GM12878 (cell line): ENCODE measurements at regions of chr11 and their contacts with region 1.

Region 1: DNA sequence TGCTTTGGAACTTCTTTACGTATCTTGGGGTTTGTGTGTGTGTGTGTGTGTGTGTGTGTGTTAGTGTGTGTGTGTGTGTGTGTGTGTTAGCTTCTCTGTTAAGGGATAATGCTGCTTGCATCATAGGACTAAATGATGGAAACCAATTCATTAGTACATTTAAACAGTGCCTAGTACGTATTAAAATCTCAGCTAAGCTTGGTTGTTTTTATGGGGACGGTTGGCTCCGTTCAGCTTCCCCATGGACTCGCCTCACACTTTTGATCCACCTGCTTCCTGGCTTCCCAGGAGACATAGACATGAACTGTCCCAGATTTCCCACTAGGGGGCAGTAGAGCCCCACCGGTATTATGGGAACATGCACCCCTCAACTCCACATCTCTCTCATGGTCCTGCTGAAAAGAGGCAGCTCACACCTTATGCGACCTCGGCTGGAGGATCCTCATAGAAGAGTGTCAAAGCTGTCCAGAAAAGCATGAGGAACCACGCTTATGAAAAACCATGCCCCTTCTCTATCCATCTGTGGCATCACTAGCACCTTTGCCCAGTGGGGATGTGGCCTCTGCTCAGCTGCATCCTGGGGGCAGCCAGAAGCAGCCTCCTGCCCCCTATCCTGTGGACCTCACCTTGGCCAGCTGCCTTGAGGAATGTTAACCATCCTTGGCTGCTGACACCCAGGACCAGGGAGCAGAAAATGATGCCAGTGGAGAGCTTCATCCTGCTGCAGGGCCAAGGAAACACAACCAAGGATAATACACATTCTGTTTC is 9.7 kb upstream of the SAAL1 start:
- DNase-seq: peak; percentile 19
- ATAC-seq: peak; percentile 97
- H3K4me3 ChIP-seq: no peak overlapping the region
- H3K27ac ChIP-seq: no peak overlapping the region
- H3K4me1 ChIP-seq: no peaks in the 10 kb centered on the region
- H3K27me3 ChIP-seq: peaks cover 0 to 1% of the 10 kb centered on the region in 2 experiments; a peak in 2 of 4 replicates
- CTCF ChIP-seq: peak; percentile 85 to 91 (median 87); a peak in 5 of 6 replicates
- EP300 ChIP-seq: no peak
- POLR2A ChIP-seq: no peak
- RAD21 ChIP-seq: peak; percentile 92

Region 2: GRCh38 chr11:17887779-17888178 is 227.8 kb before region 1 on chr11:
- CTCF ChIA-PET with region 1: no interaction called
- POLR2A ChIA-PET with region 1: no interaction called
- RAD21 ChIA-PET with region 1: no interaction called
- SMC1A ChIA-PET with region 1: no interaction called
- in situ Hi-C with region 1: no loop called
- intact Hi-C with region 1: no loop called
- DNase-seq: no peak
- ATAC-seq: no peak
- H3K4me3 ChIP-seq: no peak overlapping the region
- H3K27ac ChIP-seq: no peak overlapping the region
- H3K4me1 ChIP-seq: no peaks in the 10 kb centered on the region
- H3K27me3 ChIP-seq: no peaks in the 10 kb centered on the region
- CTCF ChIP-seq: no peak
- EP300 ChIP-seq: no peak
- POLR2A ChIP-seq: no peak
- RAD21 ChIP-seq: no peak

Region 3: GRCh38 chr11:17991783-17992433 is 123.6 kb before region 1 on chr11:
- CTCF ChIA-PET with region 1: interaction called, 38 read pairs
- POLR2A ChIA-PET with region 1: no interaction called
- RAD21 ChIA-PET with region 1: interaction called, 10 read pairs
- SMC1A ChIA-PET with region 1: interaction called, 3 read pairs
- in situ Hi-C with region 1: no loop called
- intact Hi-C with region 1: no loop called
- DNase-seq: no peak
- ATAC-seq: peak; percentile 95
- H3K4me3 ChIP-seq: no peak overlapping the region
- H3K27ac ChIP-seq: no peak overlapping the region
- H3K4me1 ChIP-seq: no peaks in the 10 kb centered on the region
- H3K27me3 ChIP-seq: no peaks in the 10 kb centered on the region
- CTCF ChIP-seq: peak; percentile 76 to 83 (median 80)
- EP300 ChIP-seq: no peak
- POLR2A ChIP-seq: no peak
- RAD21 ChIP-seq: peak; percentile 83

Region 4: DNA sequence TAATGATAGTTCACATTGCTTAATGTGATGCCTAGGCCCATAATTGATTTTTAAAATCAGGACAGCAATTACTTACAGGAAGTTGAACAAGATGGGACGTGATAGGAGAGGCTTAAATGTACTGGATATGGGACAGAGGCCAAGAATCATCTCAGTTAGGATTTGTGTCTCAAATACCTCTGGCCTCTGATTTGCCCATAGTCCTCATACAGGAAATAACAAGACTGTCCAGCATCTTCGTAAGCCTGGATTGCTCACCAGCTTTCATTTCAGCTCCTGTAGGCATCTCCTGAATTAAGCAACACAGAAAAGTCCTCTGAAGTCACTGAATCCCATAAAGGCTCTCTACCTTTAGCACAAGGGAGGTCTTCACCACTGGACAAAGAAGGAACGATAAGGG is 16.8 kb after region 1 on chr11 and contains the start of gene MRGPRX3:
- CTCF ChIA-PET with region 1: interaction called, 10 read pairs
- POLR2A ChIA-PET with region 1: no interaction called
- RAD21 ChIA-PET with region 1: no interaction called
- SMC1A ChIA-PET with region 1: no interaction called
- in situ Hi-C with region 1: no loop called
- intact Hi-C with region 1: no loop called
- DNase-seq: no peak
- ATAC-seq: no peak
- H3K4me3 ChIP-seq: no peak within 1 kb of the TSS
- H3K27ac ChIP-seq: no peak within 1 kb of the TSS
- H3K4me1 ChIP-seq: no peaks in the 10 kb centered on the region
- H3K27me3 ChIP-seq: no peaks in the 10 kb centered on the region
- CTCF ChIP-seq: no peak
- EP300 ChIP-seq: no peak
- POLR2A ChIP-seq: no peak
- RAD21 ChIP-seq: no peak
- polyA plus RNA-seq, gene MRGPRX3: not detected

Region 5: DNA sequence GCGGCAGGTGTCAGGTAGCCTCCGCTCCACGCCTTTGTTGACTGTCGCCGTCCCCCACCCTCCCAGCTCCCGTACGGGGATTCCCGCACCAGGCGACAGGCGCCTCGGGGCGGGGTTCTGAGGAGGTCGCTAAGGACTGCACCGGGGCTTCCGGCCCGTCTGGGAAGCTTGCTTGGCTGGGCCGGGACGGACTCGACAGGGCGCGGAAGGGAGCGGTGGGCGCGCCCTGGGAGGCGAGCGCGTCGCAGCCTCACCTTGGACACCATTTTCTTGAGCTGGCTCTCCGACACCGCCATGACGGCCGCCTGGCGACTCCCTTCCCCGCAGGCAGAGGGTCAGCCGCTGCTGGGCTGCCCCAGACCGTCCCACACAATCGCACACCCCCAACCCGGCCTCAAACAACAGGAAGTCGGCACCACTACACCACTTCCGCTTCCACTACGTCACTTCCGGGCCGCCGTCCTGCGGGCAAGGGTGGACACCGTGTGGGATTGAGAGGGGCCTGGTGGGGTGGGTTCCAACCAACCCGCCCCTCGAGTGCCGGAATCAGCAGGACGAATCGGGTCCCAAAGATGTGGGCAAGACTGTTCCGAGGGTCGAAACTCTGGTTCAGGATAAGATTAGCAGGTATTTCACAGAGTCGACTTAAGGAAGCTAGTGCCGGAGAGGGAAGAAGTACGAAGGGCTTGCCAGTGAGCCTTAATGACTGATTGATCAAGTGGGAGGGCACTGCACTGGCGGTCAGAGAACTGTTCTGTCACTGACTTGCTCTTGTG is 411.2 kb after region 1 on chr11 and contains the start of gene TSG101:
- CTCF ChIA-PET with region 1: interaction called, 12 read pairs
- POLR2A ChIA-PET with region 1: no interaction called
- RAD21 ChIA-PET with region 1: no interaction called
- SMC1A ChIA-PET with region 1: interaction called, 3 read pairs
- in situ Hi-C with region 1: no loop called
- intact Hi-C with region 1: loop called (anchors 5 kb)
- DNase-seq: peak; percentile 69
- ATAC-seq: peak; percentile 91
- H3K4me3 ChIP-seq: peak within 1 kb of the TSS; percentile 95
- H3K27ac ChIP-seq: peak within 1 kb of the TSS; percentile 91
- H3K4me1 ChIP-seq: no peaks in the 10 kb centered on the region; the same call in 1 of the 2 replicates
- H3K27me3 ChIP-seq: no peaks in the 10 kb centered on the region
- CTCF ChIP-seq: no peak
- EP300 ChIP-seq: peak in 1 of 2 experiments; percentile 15; a peak in 1 of 4 replicates
- POLR2A ChIP-seq: peak; percentile 98
- RAD21 ChIP-seq: no peak
- polyA plus RNA-seq, gene TSG101: 22.3 to 37.6 TPM

Region 6: GRCh38 chr11:18650859-18651557 is 535.5 kb after region 1 on chr11:
- CTCF ChIA-PET with region 1: interaction called, 7 read pairs
- POLR2A ChIA-PET with region 1: no interaction called
- RAD21 ChIA-PET with region 1: no interaction called
- SMC1A ChIA-PET with region 1: no interaction called
- in situ Hi-C with region 1: no loop called
- intact Hi-C with region 1: loop called (anchors 1 kb)
- DNase-seq: peak; percentile 20
- ATAC-seq: peak; percentile 94
- H3K4me3 ChIP-seq: no peak overlapping the region; the same call in 1 of the 2 replicates
- H3K27ac ChIP-seq: no peak overlapping the region
- H3K4me1 ChIP-seq: no peaks in the 10 kb centered on the region
- H3K27me3 ChIP-seq: no peaks in the 10 kb centered on the region
- CTCF ChIP-seq: peak; percentile 73 to 86 (median 75)
- EP300 ChIP-seq: no peak
- POLR2A ChIP-seq: peak; percentile 57; the same call in 1 of the 2 replicates
- RAD21 ChIP-seq: peak; percentile 87

Region 7: GRCh38 chr11:18853086-18853720 is 737.7 kb after region 1 on chr11:
- CTCF ChIA-PET with region 1: interaction called, 14 read pairs
- POLR2A ChIA-PET with region 1: no interaction called
- RAD21 ChIA-PET with region 1: no interaction called
- SMC1A ChIA-PET with region 1: no interaction called
- in situ Hi-C with region 1: no loop called
- intact Hi-C with region 1: no loop called
- DNase-seq: no peak
- ATAC-seq: peak; percentile 97
- H3K4me3 ChIP-seq: no peak overlapping the region
- H3K27ac ChIP-seq: no peak overlapping the region
- H3K4me1 ChIP-seq: no peaks in the 10 kb centered on the region
- H3K27me3 ChIP-seq: no peaks in the 10 kb centered on the region
- CTCF ChIP-seq: peak; percentile 61 to 76 (median 65)
- EP300 ChIP-seq: no peak
- POLR2A ChIP-seq: no peak
- RAD21 ChIP-seq: peak; percentile 65